Activated CD4-positive, alpha-beta memory T cell treated with anti-CD3 and anti-CD28 coated beads for 36 hours (primary cell): ENCODE measurements at regions of chr2 and their contacts with region 1.

Region 1: GRCh38 chr2:189783927-189784867 is at the starts of genes ORMDL1 and PMS1:
- DNase-seq: peak; percentile 96
- H3K4me3 Mint-ChIP-seq: peak within 1 kb of the TSS; percentile 90
- H3K27ac Mint-ChIP-seq: peak within 1 kb of the TSS; percentile 95
- H3K4me1 Mint-ChIP-seq: peaks cover 52% of the 10 kb centered on the region
- H3K27me3 Mint-ChIP-seq: no peaks in the 10 kb centered on the region
- total RNA-seq, gene ORMDL1: 47.0 to 49.8 TPM
- total RNA-seq, gene PMS1: 36.0 to 38.6 TPM

Region 2: GRCh38 chr2:189506514-189506976 is 277.7 kb before region 1 on chr2:
- CTCF ChIA-PET with region 1: no interaction called
- POLR2A ChIA-PET with region 1: no interaction called
- intact Hi-C with region 1: no loop called
- DNase-seq: peak; percentile 39
- H3K4me3 Mint-ChIP-seq: no peak overlapping the region
- H3K27ac Mint-ChIP-seq: peak overlapping the region; percentile 6
- H3K4me1 Mint-ChIP-seq: peaks cover 15% of the 10 kb centered on the region
- H3K27me3 Mint-ChIP-seq: no peaks in the 10 kb centered on the region

Region 3: GRCh38 chr2:189580658-189581353 is 203.4 kb before region 1 on chr2 and contains the start of gene SLC40A1:
- CTCF ChIA-PET with region 1: no interaction called
- POLR2A ChIA-PET with region 1: no interaction called
- intact Hi-C with region 1: loop called (anchors 1 kb)
- DNase-seq: peak; percentile 75
- H3K4me3 Mint-ChIP-seq: peak within 1 kb of the TSS; percentile 83
- H3K27ac Mint-ChIP-seq: peak within 1 kb of the TSS; percentile 77
- H3K4me1 Mint-ChIP-seq: peaks cover 42% of the 10 kb centered on the region
- H3K27me3 Mint-ChIP-seq: peaks cover 4% of the 10 kb centered on the region
- total RNA-seq, gene SLC40A1: 4.7 to 4.8 TPM

Region 4: GRCh38 chr2:189723192-189723591 is 61.0 kb before region 1 on chr2:
- CTCF ChIA-PET with region 1: no interaction called
- POLR2A ChIA-PET with region 1: no interaction called
- intact Hi-C with region 1: loop called (anchors 1 kb)
- DNase-seq: no peak
- H3K4me3 Mint-ChIP-seq: no peak overlapping the region
- H3K27ac Mint-ChIP-seq: no peak overlapping the region
- H3K4me1 Mint-ChIP-seq: peaks cover 13% of the 10 kb centered on the region
- H3K27me3 Mint-ChIP-seq: no peaks in the 10 kb centered on the region

Region 5: GRCh38 chr2:189819297-189819704 is 35.1 kb after region 1 on chr2:
- CTCF ChIA-PET with region 1: no interaction called
- POLR2A ChIA-PET with region 1: interaction called, 4 read pairs
- intact Hi-C with region 1: loop called (anchors 1 kb)
- DNase-seq: no peak
- H3K4me3 Mint-ChIP-seq: no peak overlapping the region
- H3K27ac Mint-ChIP-seq: peak overlapping the region; percentile 82
- H3K4me1 Mint-ChIP-seq: peaks cover 16% of the 10 kb centered on the region
- H3K27me3 Mint-ChIP-seq: no peaks in the 10 kb centered on the region

Region 6: DNA sequence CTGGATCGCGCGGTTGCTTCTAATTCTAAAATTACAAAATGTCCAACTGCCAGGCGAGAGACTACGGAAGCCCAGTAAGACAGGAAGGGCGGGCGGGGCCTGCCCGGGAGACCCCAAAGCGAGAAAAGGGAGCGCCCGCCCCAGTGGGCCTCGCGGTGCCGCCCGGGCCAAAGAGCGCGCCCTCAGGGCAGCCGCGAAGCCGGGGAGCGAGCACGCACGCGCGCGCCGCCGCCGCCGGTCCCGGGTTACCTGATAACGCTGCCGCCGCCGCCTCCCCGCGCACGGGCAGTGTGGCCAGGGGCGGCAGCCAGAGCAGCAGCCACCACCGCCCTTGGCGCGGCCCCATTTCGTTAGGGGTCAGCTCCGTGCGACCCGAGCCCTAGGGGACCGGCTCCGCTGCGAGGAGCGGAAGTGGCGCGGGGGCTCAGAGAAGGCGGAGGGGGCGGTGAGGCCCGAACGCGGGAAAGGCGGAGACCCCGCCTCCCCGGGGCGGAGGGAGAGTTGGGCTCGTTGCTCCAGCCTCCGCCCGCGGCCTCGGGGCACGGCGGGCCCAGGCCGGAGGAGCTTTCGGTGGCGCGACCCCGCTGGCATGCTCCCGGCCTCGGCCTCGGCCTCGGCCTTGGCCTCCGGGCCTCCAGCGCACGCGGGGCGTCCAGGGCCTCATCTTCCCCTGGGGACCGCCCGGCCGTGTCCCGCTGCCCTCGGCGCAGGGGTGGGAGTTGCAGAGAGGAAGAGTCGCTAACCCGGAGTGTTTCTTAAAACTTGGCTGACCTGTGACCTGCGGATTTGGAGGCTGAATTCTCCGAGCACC is 750.3 kb after region 1 on chr2 and contains the start of gene NEMP2:
- CTCF ChIA-PET with region 1: no interaction called
- POLR2A ChIA-PET with region 1: no interaction called
- intact Hi-C with region 1: loop called (anchors 5 kb)
- DNase-seq: peak; percentile 86
- H3K4me3 Mint-ChIP-seq: peak within 1 kb of the TSS; percentile 95
- H3K27ac Mint-ChIP-seq: peak within 1 kb of the TSS; percentile 99
- H3K4me1 Mint-ChIP-seq: peaks cover 57% of the 10 kb centered on the region
- H3K27me3 Mint-ChIP-seq: no peaks in the 10 kb centered on the region
- total RNA-seq, gene NEMP2: 28.8 to 30.0 TPM